CD4-positive, alpha-beta T cell (primary cell): ENCODE measurements at regions of chr11 and their contacts with region 1.

Region 1: DNA sequence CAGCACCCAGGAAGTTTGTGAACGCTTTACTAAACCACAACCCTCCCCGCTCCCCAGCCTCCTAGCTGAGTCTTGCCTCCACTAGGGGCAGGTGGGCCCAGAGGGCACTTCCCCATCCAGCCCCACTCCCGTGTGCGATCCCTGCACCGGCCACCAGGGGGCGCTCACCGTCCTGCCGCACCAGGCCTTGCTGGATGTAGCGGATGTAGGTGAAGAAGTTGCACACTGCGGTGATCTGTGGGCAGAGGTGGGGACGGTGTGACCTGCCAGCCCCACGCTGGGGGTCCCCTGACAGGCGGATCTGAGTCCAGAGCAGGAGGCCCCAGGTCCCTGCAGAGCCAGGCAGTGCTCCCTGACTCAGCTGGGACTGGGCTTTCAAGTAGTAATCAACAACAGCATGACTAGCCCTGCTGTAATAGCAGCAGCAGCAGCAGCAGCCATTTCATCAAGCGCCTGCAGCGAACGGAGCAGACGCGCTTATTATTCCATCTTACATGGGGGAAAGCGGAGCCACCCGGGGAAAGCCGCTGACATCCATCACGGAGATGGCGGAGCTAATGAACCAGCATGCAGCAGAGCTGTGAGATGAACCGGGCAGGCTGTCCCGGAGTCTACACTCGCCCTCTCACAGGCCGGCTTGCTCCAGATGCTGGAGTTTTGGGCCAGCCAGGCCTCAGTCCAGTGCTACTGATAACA is 7.9 kb upstream of the FADS3 start:
- DNase-seq: peak; percentile 87 to 97 (median 93)
- ATAC-seq: peak; percentile 98
- H3K4me3 ChIP-seq: no peak overlapping the region
- H3K4me3 Mint-ChIP-seq: no peak overlapping the region
- H3K27ac ChIP-seq: no peak overlapping the region
- H3K27ac Mint-ChIP-seq: no peak overlapping the region
- H3K4me1 ChIP-seq: peaks cover 9% of the 10 kb centered on the region
- H3K4me1 Mint-ChIP-seq: peaks cover 6% of the 10 kb centered on the region
- H3K27me3 ChIP-seq: no peaks in the 10 kb centered on the region
- H3K27me3 Mint-ChIP-seq: no peaks in the 10 kb centered on the region
- CTCF ChIP-seq: peak; percentile 98

Region 2: GRCh38 chr11:61947486-61948210 is 48.4 kb after region 1 on chr11:
- CTCF ChIA-PET with region 1: interaction called, 44 read pairs
- POLR2A ChIA-PET with region 1: no interaction called
- intact Hi-C with region 1: loop called (anchors 1 to 5 kb)
- DNase-seq: peak; percentile 42 to 81 (median 58)
- ATAC-seq: peak; percentile 87
- H3K4me3 ChIP-seq: no peak overlapping the region
- H3K4me3 Mint-ChIP-seq: no peak overlapping the region
- H3K27ac ChIP-seq: no peak overlapping the region
- H3K27ac Mint-ChIP-seq: no peak overlapping the region
- H3K4me1 ChIP-seq: peaks cover 8% of the 10 kb centered on the region
- H3K4me1 Mint-ChIP-seq: no peaks in the 10 kb centered on the region
- H3K27me3 ChIP-seq: peaks cover 0 to 3% of the 10 kb centered on the region in 2 experiments
- H3K27me3 Mint-ChIP-seq: peaks cover 16% of the 10 kb centered on the region
- CTCF ChIP-seq: peak; percentile 70

Region 3: GRCh38 chr11:62050716-62051115 is 151.4 kb after region 1 on chr11:
- CTCF ChIA-PET with region 1: interaction called, 12 read pairs
- POLR2A ChIA-PET with region 1: no interaction called
- intact Hi-C with region 1: no loop called
- DNase-seq: no peak
- ATAC-seq: no peak
- H3K4me3 ChIP-seq: no peak overlapping the region
- H3K4me3 Mint-ChIP-seq: no peak overlapping the region
- H3K27ac ChIP-seq: no peak overlapping the region
- H3K27ac Mint-ChIP-seq: no peak overlapping the region
- H3K4me1 ChIP-seq: no peaks in the 10 kb centered on the region
- H3K4me1 Mint-ChIP-seq: no peaks in the 10 kb centered on the region
- H3K27me3 ChIP-seq: no peaks in the 10 kb centered on the region
- H3K27me3 Mint-ChIP-seq: peaks cover 7% of the 10 kb centered on the region
- CTCF ChIP-seq: no peak

Region 4: GRCh38 chr11:62108017-62108750 is 208.9 kb after region 1 on chr11:
- CTCF ChIA-PET with region 1: interaction called, 132 read pairs
- POLR2A ChIA-PET with region 1: interaction called, 4 read pairs
- intact Hi-C with region 1: loop called (anchors 1 kb)
- DNase-seq: peak in 8 of 14 experiments; percentile 19 to 82 (median 42)
- ATAC-seq: peak; percentile 62
- H3K4me3 ChIP-seq: no peak overlapping the region
- H3K4me3 Mint-ChIP-seq: peak overlapping the region; percentile 52
- H3K27ac ChIP-seq: no peak overlapping the region
- H3K27ac Mint-ChIP-seq: no peak overlapping the region
- H3K4me1 ChIP-seq: peaks cover 26% of the 10 kb centered on the region
- H3K4me1 Mint-ChIP-seq: peaks cover 11% of the 10 kb centered on the region
- H3K27me3 ChIP-seq: no peaks in the 10 kb centered on the region
- H3K27me3 Mint-ChIP-seq: no peaks in the 10 kb centered on the region
- CTCF ChIP-seq: peak; percentile 85

Region 5: DNA sequence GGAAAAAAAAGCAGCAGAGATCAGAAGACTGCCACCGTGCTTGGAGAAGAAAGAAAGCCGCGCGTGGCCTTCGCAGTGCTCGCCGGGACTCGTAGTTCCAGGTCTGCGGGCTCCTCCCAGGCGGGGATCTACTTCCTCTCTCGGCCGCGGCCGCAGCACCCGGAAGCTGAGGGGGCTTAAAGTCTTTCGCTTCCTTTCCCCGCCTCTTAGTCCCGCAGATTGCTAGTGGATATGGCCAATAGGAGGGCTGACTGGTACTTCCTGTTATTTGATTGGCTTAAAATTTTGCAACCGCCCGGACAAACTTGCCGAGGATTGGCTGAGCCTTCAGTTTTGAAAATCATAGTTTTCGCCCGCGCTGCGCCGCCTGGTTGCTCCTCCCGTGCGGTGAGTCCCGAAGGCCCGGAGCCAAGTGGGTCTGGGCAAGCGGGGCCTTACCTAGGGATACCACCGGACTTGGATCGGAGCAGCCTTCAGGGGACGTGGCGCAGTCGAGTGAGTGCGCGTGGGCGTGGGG is 224.4 kb after region 1 on chr11 and contains the start of gene INCENP:
- CTCF ChIA-PET with region 1: interaction called, 17 read pairs
- POLR2A ChIA-PET with region 1: no interaction called
- intact Hi-C with region 1: no loop called
- DNase-seq: peak; percentile 87 to 98 (median 92)
- ATAC-seq: peak; percentile 99
- H3K4me3 ChIP-seq: peak within 1 kb of the TSS; percentile 87
- H3K4me3 Mint-ChIP-seq: peak within 1 kb of the TSS; percentile 97
- H3K27ac ChIP-seq: no peak within 1 kb of the TSS
- H3K27ac Mint-ChIP-seq: peak within 1 kb of the TSS; percentile 89
- H3K4me1 ChIP-seq: peaks cover 17% of the 10 kb centered on the region
- H3K4me1 Mint-ChIP-seq: peaks cover 30% of the 10 kb centered on the region
- H3K27me3 ChIP-seq: no peaks in the 10 kb centered on the region
- H3K27me3 Mint-ChIP-seq: no peaks in the 10 kb centered on the region
- CTCF ChIP-seq: no peak
- total RNA-seq, gene INCENP: 12.6 to 16.3 TPM